ENCODE measurements at regions of chr12 and their contacts with region 1.

Region 1: DNA sequence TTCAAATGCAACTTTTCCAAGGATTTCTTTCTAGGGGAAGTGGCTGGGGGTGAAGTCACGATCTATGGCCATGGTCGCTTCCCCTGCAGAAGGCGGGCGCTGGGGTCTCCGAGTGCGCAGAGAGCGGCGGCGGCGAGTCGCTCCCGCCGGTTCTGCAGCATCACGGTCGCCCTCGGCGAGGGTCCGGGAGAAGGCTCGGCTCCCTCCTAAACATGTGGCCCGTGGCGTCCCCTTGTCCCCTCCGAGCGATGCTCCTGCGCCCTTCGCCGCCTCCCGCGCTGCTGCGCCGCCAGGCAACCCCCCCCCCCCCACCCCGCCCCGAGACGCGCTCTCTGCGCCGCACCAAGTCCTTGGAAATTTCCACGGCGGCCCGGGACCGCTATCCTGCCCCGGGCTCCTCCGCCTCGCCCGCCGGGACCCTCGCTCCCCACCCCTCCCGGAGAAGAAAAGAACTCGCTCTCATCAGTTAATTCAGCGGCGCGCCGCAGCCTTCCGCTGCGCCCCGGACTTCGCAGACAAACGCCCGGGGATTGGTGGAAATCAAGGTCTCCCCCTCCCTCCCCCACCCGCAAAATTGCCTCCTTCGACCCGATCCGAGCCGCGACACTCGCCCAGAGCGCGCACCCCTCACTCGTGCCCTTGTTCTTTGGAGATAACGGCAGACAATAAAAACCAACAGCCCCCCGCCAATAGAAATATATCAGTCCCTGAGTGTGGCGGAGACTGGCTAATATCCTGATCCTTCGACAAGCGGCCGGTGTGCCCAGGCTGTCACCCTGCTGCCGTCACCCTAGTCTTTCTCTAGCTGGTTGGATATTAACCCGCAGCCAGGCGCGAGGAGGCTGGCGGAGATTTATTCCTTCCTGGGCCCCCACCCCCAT is at the start of gene ST8SIA1:
- DNase-seq: peak; percentile 80
- total RNA-seq, gene ST8SIA1: 2.8 to 4.0 TPM

Region 2: GRCh38 chr12:20696181-20696905 is 1638.3 kb before region 1 on chr12:
- intact Hi-C with region 1: loop called in 1 of 2 experiments (anchors 5 kb)
- DNase-seq: peak; percentile 72

Region 3: DNA sequence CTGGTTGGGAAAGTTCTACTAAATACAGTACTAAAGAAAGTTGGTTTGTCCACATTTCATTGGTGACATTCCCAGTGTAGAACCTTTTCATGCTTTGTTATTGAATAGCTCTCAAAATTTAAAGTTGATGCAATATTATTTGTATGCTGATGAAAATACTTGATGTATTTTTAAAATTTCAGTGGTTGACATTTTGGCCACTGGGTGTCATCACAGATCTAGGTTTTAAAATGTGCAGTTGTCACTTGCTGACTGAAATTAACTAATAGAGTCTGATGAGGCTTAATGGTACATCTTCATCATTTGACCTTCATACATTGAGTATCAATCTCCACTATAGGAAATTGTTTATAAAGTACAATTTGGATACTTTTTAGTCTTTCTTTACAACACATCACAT is 251.5 kb before region 1 on chr12:
- intact Hi-C with region 1: loop called (anchors 2 to 5 kb)
- DNase-seq: no peak

Region 4: GRCh38 chr12:22088886-22089285 is 245.8 kb before region 1 on chr12:
- intact Hi-C with region 1: loop called in 1 of 2 experiments (anchors 5 kb)
- DNase-seq: no peak

Region 5: DNA sequence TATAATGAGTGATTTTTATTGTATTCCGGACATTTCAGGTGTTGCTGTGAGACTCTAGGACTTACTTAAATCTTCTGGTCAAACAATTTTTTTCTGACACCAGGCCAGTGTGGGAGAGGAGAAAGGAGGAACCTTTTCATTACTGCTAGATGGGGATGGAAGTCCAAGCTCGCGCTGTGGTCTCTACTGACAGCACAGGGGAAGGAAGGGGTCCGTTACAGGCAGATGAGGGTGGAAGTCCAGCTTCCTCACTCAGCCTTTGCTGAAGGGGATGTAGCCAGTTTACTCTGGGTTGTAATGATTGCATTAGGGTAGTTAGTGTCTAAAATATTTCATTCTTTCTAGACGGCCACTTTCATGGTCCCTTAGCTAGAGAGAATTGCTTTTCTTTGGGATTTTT is 26.1 kb after region 1 on chr12:
- intact Hi-C with region 1: no loop called
- DNase-seq: peak; percentile 71

Region 6: DNA sequence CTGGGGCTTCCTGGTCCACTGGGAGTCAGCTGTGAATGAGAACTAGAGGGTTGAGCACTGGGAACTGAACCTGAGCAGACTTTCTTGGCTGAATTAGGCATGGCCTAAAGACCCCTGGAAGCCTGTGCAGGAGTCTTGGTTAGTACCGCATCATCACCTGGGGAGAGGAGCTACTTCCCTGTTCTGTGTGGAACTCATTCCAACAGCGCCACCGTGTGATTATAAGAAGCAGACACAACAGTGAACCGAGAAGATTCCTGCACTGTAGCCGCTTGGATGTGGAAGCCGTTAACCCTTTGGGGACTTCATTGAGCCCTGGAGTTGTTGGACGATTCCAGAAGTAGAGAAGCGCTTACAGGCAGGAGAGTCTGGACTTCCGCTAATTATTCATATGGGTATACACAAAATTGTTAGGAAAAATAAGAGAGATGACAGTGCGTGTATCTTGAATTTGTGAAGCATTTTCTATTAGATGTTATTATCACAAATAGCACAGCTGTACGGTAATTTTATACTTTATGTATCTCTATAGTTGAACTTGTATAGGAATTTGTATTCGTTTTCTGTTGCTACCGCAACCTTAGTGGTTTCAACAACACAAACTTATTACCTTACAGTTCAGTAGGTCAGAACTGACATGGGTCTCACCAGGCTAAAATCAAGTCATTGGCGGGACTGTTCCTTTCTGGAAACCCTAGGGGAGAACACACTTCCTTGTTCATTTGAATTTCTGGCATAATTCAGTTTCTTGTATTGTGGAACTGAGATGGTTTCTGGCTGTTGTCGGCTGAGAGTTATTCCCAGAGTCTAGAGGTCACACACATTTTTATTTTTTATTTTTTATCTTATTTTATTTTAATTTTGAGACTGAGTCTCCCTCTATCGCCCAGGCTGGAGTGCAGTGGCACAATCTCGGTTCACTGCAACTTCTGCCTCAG is 109.0 kb after region 1 on chr12:
- intact Hi-C with region 1: loop called in 1 of 2 experiments (anchors 5 kb)
- DNase-seq: peak; percentile 66

Measured in posterior vena cava (tissue), 2 donors.